ENCODE measurements at regions of chr19 and their contacts with region 1.

Region 1: DNA sequence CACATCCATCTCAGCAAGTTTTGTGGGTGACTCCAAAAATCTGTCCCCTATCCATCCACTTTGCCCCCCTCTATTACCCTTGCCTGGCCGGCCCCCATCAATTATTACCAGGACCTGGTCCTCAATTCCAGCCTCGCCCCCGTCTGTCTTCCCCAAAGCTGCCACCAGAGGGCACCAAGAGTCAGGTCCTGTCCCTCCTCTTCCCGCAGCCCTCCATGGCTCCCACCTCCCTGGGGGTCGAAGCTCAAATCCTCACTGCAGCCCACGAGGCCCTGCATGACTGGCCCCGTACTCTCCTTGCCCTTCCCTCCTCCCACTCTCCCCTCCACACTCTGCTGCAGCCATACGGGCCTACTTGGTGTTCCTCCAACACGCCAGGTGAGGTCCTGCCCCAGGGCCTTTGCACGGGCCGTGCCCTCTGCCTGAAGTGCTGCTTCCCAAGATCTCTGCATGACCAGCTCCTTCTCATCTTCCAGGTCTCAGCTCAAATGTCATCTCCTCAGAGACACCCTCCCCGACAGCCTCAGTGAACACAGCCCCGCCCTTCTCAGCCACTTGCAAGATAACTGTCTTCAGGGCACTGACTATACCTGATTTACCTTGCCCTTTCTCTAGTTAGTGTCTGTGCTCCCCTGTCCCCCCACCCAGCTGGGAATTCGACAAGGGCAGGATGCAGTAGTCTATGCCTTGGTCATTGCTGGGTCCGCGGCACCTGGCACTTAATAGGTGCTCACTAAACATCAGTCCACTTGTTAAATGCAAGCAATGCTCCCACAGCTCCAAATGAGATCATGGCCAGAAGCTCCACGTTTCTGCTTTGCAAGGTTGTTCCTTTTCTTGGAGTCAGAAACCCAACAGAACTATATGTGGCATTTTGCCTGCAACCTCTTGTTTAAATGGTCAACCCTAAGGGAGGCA is 16.8 kb upstream of the SEMA6B start:
- DNase-seq: no peak
- H3K4me3 ChIP-seq: no peak overlapping the region
- H3K27ac ChIP-seq: peak overlapping the region in 3 of 4 donors; percentile 58 to 79 (median 77)
- H3K4me1 ChIP-seq: peaks cover 5 to 32% (median 6%) of the 10 kb centered on the region in 3 donors
- H3K27me3 ChIP-seq: peaks cover 3 to 84% (median 15%) of the 10 kb centered on the region in 4 donors
- CTCF ChIP-seq: peak; percentile 47 to 74 (median 68)
- POLR2A ChIP-seq: no peak

Region 2: GRCh38 chr19:4633140-4633967 is 57.1 kb after region 1 on chr19:
- intact Hi-C with region 1: loop called (anchors 5 kb)
- DNase-seq: no peak
- H3K4me3 ChIP-seq: no peak overlapping the region
- H3K27ac ChIP-seq: no peak overlapping the region
- H3K4me1 ChIP-seq: peaks cover 6 to 36% (median 19%) of the 10 kb centered on the region in 3 donors
- H3K27me3 ChIP-seq: peaks cover 0 to 27% (median 0%) of the 10 kb centered on the region in 4 donors
- CTCF ChIP-seq: peak in 5 of 6 experiments; percentile 49 to 72 (median 64)
- POLR2A ChIP-seq: peak in 1 of 4 donors; percentile 9

Measured in esophagus squamous epithelium (tissue), 5 donors.